Calu3 (cell line): ENCODE measurements at regions of chr3 and their contacts with region 1.

Region 1: DNA sequence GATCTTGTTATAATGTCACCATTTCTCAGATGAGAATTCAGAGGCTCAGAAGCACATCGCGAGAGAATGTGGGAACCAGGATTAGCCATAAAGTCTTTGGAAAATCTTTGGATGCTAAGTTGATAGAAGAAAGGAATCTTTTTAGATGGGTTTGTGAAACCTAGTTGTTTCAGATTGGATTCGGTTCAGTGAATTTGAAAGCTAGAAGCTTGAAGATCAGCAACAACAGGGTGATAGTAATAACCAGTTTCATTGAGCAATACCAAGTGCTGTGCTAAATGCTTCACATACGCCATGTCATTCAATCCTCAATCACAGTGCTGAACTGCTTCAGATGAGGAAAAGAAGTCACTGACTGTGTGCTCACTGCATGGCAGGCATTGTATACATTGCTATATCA is 47.4 kb upstream of the MITF start:
- DNase-seq: no peak
- H3K4me3 Mint-ChIP-seq: no peak overlapping the region
- H3K27ac Mint-ChIP-seq: no peak overlapping the region
- H3K4me1 Mint-ChIP-seq: no peaks in the 10 kb centered on the region
- H3K27me3 Mint-ChIP-seq: no peaks in the 10 kb centered on the region
- CTCF ChIP-seq: no peak

Region 2: DNA sequence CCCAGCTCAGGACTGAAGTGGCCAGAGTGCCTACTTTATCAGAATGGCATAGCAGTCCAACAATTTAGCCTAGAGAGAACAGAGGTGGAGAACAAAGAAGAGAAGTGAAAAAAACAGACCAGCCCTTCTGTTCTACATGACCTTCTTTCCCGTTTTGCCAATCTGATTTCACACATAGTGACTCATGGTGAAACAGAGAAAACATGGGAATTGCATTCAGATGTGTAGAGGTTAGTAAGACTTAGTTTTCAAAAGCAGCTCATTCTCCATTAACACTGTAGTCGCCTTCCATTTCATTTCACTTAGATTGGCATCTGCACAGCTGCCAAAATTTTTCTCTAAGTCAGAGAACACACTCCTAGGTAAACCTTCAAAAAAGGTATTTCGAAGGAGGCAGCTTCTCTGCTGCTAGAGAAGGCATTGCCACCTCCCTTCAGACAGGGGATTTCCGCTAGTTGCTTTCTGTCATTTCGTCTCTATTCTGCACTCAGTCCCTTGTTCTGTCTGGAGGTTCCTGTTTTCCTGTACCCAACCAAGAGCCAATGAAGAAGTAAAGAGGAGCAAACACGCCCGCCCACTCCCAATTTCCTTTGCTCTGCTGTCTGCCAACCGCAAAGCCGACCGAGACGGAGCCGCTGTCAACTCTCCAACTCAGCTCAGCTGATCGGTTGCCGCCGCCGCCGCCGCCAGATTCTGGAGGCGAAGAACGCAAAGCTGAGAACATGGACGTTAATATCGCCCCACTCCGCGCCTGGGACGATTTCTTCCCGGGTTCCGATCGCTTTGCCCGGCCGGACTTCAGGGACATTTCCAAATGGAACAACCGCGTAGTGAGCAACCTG is 607.3 kb before region 1 on chr3 and contains the start of gene ARL6IP5:
- CTCF ChIA-PET with region 1: no interaction called
- intact Hi-C with region 1: no loop called
- DNase-seq: peak; percentile 88
- H3K4me3 Mint-ChIP-seq: peak within 1 kb of the TSS; percentile 82
- H3K27ac Mint-ChIP-seq: peak within 1 kb of the TSS; percentile 93
- H3K4me1 Mint-ChIP-seq: peaks cover 38% of the 10 kb centered on the region
- H3K27me3 Mint-ChIP-seq: no peaks in the 10 kb centered on the region
- CTCF ChIP-seq: no peak
- total RNA-seq, gene ARL6IP5: 65.5 and 76.9 TPM in 2 replicates

Region 3: GRCh38 chr3:69568458-69568857 is 123.4 kb before region 1 on chr3:
- CTCF ChIA-PET with region 1: no interaction called
- intact Hi-C with region 1: no loop called
- DNase-seq: no peak
- H3K4me3 Mint-ChIP-seq: no peak overlapping the region
- H3K27ac Mint-ChIP-seq: no peak overlapping the region
- H3K4me1 Mint-ChIP-seq: no peaks in the 10 kb centered on the region
- H3K27me3 Mint-ChIP-seq: peaks cover 20% of the 10 kb centered on the region
- CTCF ChIP-seq: no peak

Region 4: GRCh38 chr3:69791919-69792399 is 100.1 kb after region 1 on chr3:
- CTCF ChIA-PET with region 1: interaction called, 3 read pairs
- intact Hi-C with region 1: loop called (anchors 1 kb)
- DNase-seq: no peak
- H3K4me3 Mint-ChIP-seq: no peak overlapping the region
- H3K27ac Mint-ChIP-seq: no peak overlapping the region
- H3K4me1 Mint-ChIP-seq: peaks cover 9% of the 10 kb centered on the region
- H3K27me3 Mint-ChIP-seq: no peaks in the 10 kb centered on the region
- CTCF ChIP-seq: no peak

Region 5: GRCh38 chr3:69855436-69856162 is 163.7 kb after region 1 on chr3:
- CTCF ChIA-PET with region 1: interaction called, 18 read pairs
- intact Hi-C with region 1: loop called (anchors 1 kb)
- DNase-seq: no peak
- H3K4me3 Mint-ChIP-seq: no peak overlapping the region
- H3K27ac Mint-ChIP-seq: no peak overlapping the region
- H3K4me1 Mint-ChIP-seq: peaks cover 28% of the 10 kb centered on the region
- H3K27me3 Mint-ChIP-seq: no peaks in the 10 kb centered on the region
- CTCF ChIP-seq: no peak